ENCODE measurements at regions of chr11 and their contacts with region 1.

Region 1: DNA sequence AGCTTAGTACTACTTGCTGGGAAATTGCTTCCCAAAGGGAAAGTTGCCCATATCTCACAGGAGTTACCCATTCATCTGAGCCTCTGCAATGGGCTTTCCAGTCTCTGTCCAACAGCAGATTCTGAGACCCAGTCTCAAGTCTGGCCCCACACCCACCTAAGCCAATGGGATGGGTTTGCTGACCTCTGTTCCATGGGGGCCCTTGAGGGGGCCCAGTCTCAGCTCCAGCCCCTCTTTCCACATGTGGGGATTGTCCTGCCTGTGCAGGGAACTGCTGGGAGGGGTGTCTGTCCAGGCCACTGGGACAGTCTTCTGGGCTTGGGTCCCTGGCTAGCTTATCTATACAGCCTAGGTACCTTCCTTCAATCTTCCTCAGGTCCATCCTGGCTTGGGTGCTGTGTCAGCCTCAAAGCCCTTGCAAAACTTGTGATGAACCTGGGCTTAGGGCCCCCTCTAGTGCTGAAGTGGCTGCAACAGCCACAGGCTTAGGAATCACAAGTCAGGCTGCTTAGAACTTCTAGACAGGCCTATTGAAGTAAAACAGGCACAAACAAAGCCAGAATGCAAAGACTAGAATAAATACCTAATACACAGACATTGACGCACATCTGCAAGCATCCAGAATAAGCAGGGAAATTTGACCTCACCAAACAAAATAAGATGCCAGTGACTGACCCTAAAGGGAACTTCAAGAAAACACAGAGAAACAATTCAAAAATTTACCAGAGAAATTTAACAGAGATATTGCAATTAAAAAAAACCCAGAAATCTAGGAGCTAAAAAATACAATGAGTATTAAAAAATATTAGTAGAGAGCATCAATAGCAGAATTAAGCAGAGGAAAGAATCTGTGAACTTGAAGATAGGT is 11.7 kb upstream of the PATL1 start:
- DNase-seq: peak; percentile 82

Region 2: GRCh38 chr11:59534676-59535075 is 145.8 kb before region 1 on chr11:
- intact Hi-C with region 1: loop called in 1 of 2 experiments (anchors 10 kb)
- DNase-seq: no peak